Left lung (tissue), 14 donors: ENCODE measurements at regions of chr2 and their contacts with region 1.

Region 1: DNA sequence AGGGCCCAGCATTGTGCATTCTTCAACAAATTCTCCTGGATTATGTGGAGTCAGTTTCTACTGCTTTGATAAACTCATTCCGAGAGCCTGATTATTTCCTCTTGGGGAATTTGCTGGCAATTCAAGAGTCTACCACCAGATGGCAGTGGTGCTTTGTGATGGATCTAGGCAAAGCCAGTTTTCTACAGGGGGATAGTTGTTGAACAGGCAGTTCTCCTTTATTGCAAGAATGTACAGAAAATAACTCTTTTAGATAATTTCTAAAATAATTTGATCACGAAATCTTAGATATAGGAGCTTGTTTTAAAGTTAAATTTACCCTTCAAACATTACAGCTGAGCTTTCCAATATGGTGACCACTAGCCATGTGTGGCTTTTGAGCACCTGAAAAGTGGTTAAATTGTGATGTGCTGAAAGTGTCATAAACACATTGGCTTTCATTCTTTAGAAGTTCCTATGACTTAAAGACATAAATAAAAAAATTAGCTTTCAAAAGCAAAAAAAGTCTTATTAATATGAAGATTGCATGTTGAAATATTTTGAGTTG is 66.7 kb upstream of the HAAO start:
- DNase-seq: peak in 1 of 4 donors; percentile 66
- ATAC-seq: peak; percentile 84
- H3K4me3 ChIP-seq: no peak overlapping the region
- H3K27ac ChIP-seq: no peak overlapping the region
- H3K4me1 ChIP-seq: no peaks in the 10 kb centered on the region
- H3K27me3 ChIP-seq: no peaks in the 10 kb centered on the region
- CTCF ChIP-seq: peak; percentile 86 to 94

Region 2: DNA sequence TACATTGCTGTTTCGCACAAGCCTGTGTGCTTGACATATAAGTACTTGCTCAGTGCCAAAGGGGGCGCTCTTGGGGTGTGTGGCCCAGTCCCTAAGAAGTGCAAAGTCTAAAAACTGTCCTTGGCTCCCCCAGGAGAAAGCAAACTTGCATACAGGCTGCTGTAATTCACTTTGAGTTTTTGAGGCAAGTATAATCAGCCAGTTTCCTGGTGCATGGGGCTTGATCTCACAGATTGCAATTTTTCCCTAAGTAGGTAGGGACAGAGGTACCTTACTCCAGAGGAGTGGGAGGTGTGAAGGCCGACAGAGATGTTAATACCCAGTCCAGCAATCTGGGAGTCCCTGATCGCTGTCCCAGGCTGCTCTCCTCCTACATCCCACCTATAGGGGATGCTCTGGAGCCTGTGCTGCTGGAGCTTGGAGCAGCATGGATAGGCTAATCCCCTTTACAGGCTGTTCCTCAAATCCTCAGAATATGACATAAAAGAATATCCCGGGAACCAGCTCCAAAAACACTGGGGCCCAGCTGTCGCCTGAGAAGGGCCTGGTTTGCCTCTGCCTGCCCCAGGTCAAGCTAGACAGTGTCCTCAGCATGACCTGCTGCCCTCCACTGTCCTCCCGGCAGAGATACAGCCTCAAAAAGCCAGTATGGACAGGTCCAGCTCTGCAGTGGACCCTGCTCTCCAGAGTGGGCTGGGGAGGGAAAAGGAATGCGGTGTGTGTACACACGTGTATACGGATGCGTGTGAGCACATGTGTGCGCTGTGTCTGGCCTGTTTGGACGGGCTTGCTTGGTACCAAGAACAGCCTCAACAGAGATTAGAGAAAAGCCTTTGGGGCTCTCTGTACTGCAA is 69.8 kb after region 1 on chr2:
- intact Hi-C with region 1: loop called in 1 of 2 experiments (anchors 10 kb)
- DNase-seq: no peak
- ATAC-seq: no peak
- H3K4me3 ChIP-seq: no peak overlapping the region
- H3K27ac ChIP-seq: peak overlapping the region; percentile 73 to 79
- H3K4me1 ChIP-seq: peaks cover 46 to 78% of the 10 kb centered on the region in 2 donors
- H3K27me3 ChIP-seq: peaks cover 0 to 7% of the 10 kb centered on the region in 2 donors
- CTCF ChIP-seq: peak in 1 of 2 donors; percentile 11